Right ventricle myocardium inferior (tissue), 1 donor: ENCODE measurements at regions of chr20 and their contacts with region 1.

Region 1: DNA sequence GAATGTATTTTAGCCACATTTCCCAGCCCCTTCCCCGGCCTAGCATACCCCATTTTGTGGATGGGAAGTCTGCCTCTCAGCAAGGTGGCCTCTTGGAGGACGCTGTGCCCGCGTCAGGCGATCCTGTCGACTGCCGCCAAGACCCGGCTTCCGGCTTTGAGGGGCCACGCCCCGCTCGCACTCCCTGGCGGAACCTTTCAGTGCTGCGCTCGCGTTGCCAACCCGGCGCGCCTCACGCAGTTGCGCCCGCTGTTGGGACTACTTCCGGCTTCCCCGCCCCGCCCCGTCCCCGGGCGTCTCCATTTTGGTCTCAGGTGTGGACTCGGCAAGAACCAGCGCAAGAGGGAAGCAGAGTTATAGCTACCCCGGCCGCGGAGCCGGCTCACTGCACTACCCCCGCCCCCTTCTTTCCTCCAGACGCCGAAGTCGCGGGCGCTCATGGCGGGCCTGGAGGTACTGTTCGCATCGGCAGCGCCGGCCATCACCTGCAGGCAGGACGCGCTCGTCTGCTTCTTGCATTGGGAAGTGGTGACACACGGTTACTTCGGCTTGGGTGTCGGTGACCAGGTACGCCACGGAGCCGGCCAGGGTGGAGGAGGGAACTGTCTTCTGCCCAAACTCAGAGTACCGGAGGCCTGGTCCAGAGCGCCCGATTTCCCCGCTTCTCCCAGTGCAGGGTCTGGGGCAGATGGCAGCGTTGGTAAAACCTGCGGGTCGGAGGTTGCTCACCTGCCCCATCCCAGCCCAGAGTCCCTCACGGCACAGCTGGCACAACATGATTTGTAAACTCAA is at the start of gene PSMF1:
- DNase-seq: peak; percentile 98
- ATAC-seq: peak; percentile 98
- total RNA-seq, gene PSMF1: 132 TPM

Region 2: GRCh38 chr20:844473-845225 is 273.9 kb before region 1 on chr20:
- intact Hi-C with region 1: loop called (anchors 10 kb)
- DNase-seq: peak; percentile 94
- ATAC-seq: peak; percentile 97

Region 3: GRCh38 chr20:1212607-1213396 is 94.3 kb after region 1 on chr20:
- intact Hi-C with region 1: loop called (anchors 10 kb)
- DNase-seq: peak; percentile 80
- ATAC-seq: peak; percentile 83

Region 4: GRCh38 chr20:1392823-1393506 is 274.4 kb after region 1 on chr20 and contains the start of gene FKBP1A:
- intact Hi-C with region 1: loop called (anchors 5 kb)
- DNase-seq: peak; percentile 97
- ATAC-seq: peak; percentile 99
- total RNA-seq, gene FKBP1A: 143 TPM

Region 5: GRCh38 chr20:1466211-1467081 is 347.9 kb after region 1 on chr20 and contains the start of gene NSFL1C:
- intact Hi-C with region 1: loop called (anchors 2 kb)
- DNase-seq: peak; percentile 97
- ATAC-seq: peak; percentile 98
- total RNA-seq, gene NSFL1C: 51.6 TPM